ENCODE measurements at regions of chr12 and their contacts with region 1.

Region 1: GRCh38 chr12:12008931-12009611 is 61.7 kb upstream of the BCL2L14 start:
- DNase-seq: peak; percentile 87
- H3K4me3 Mint-ChIP-seq: peak overlapping the region; percentile 25
- H3K27ac Mint-ChIP-seq: peak overlapping the region; percentile 99
- H3K4me1 Mint-ChIP-seq: peaks cover 74% of the 10 kb centered on the region
- H3K27me3 Mint-ChIP-seq: no peaks in the 10 kb centered on the region

Region 2: DNA sequence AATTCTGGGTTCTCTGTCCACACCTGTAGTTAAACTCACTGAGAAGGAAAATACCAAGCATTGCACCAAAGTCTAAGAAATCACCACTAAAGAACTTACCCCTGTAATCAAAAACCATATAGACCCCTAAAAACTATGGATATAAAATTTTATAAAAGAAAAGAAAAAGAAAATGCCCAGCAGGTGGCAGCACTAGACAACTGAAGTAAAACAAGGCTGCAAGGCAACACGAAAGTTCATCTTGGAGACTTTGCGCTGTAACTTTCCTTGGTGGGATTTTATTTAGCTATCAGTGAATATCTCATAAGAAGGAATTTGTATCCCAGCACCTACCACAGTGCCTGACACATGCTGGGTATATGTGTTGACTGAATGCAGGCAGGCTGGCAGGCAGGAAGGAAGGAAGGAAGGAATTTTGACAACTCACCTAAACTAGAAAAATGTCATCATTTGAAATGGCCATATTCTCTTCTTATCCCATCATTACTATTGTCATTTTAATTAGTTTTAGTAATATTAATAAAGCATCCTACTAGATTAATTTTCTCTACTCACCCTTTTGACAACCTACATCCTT is 427.8 kb before region 1 on chr12:
- CTCF ChIA-PET with region 1: interaction called, 15 read pairs
- intact Hi-C with region 1: loop called (anchors 1 kb)
- DNase-seq: peak; percentile 84
- H3K4me3 Mint-ChIP-seq: no peak overlapping the region
- H3K27ac Mint-ChIP-seq: no peak overlapping the region
- H3K4me1 Mint-ChIP-seq: peaks cover 18% of the 10 kb centered on the region
- H3K27me3 Mint-ChIP-seq: peaks cover 6% of the 10 kb centered on the region

Region 3: GRCh38 chr12:11730299-11731041 is 278.6 kb before region 1 on chr12:
- CTCF ChIA-PET with region 1: interaction called, 3 read pairs
- intact Hi-C with region 1: loop called (anchors 1 kb)
- DNase-seq: peak; percentile 27
- H3K4me3 Mint-ChIP-seq: no peak overlapping the region
- H3K27ac Mint-ChIP-seq: peak overlapping the region; percentile 85
- H3K4me1 Mint-ChIP-seq: peaks cover 86% of the 10 kb centered on the region
- H3K27me3 Mint-ChIP-seq: no peaks in the 10 kb centered on the region

Region 4: GRCh38 chr12:11780521-11781101 is 228.5 kb before region 1 on chr12:
- CTCF ChIA-PET with region 1: interaction called, 11 read pairs
- intact Hi-C with region 1: loop called (anchors 1 kb)
- DNase-seq: peak; percentile 68
- H3K4me3 Mint-ChIP-seq: peak overlapping the region; percentile 2
- H3K27ac Mint-ChIP-seq: peak overlapping the region; percentile 85
- H3K4me1 Mint-ChIP-seq: peaks cover 74% of the 10 kb centered on the region
- H3K27me3 Mint-ChIP-seq: no peaks in the 10 kb centered on the region

Region 5: DNA sequence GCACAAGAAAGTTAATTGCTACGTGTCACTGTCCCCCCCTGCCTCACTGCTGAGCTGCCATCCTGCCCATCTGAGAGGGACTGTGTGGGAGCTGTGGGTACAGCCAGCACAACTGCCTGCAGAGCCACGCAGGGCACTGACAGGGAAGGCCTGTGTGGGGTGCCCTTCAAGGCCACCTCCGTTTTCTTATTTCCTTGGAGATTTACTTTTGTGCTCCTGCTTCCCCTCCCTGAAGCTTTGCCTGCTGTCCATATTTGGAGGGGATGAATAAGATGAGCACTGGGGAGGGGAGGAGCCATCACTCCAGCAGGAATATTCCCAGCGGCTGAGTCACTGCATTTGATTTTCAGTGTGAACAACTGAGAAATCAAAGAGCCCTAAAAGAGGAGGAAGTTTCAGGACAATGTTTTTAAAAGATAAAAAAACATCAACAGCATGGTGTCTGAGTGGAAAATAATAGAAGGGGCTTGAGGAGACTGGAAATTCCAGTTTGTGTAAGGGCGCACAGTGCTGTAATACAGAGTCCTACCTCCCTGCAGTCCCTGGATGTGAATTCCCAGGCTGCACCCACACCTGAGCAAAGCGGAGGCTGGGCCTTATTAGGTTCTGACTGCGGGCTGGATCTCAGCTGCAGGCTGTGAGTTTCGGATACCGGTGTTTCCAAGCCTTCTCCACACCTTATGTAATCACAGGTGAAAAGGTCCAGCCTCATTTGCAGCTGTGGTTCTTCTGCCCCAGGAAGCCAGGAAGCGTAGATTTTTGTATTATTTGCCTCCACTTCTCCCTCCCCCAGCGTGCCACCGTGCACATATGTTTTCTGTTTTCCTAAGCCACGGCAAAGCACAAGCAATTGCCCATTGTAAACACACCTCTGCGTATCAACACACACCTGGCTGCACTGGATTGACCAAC is 130.9 kb before region 1 on chr12:
- CTCF ChIA-PET with region 1: no interaction called
- intact Hi-C with region 1: loop called (anchors 1 kb)
- DNase-seq: peak; percentile 26
- H3K4me3 Mint-ChIP-seq: no peak overlapping the region
- H3K27ac Mint-ChIP-seq: no peak overlapping the region
- H3K4me1 Mint-ChIP-seq: peaks cover 47% of the 10 kb centered on the region
- H3K27me3 Mint-ChIP-seq: no peaks in the 10 kb centered on the region

Region 6: DNA sequence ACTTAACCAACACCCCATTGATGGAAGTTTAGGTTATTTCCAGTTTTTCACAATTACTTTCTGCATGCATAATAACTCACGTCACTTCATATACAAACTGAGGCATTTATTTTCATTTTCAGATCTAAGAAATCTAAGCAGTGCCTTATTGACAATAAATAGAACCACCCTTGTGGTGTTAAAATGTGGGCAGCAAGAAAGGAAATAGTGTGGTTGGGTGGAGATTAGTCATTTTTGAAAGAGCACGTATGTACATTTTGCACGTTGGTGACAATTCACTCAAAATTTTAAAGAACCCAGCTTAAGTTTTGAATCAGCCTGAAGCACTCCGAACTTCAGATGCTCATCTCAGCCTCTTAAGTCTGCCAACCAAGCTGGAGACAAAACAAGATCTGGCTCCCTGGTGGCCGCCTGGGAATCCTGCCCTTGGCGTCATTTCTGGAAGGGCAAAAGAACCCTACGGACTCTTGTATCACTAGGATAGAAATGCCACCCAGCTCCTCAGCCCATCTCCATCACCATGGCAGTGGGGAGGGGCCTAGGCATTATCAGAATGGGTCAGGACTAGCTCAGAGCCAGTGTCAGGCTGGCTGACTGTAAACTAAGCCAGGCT is 27.8 kb before region 1 on chr12:
- CTCF ChIA-PET with region 1: interaction called, 42 read pairs
- intact Hi-C with region 1: loop called (anchors 1 kb)
- DNase-seq: peak; percentile 72
- H3K4me3 Mint-ChIP-seq: no peak overlapping the region
- H3K27ac Mint-ChIP-seq: peak overlapping the region; percentile 98
- H3K4me1 Mint-ChIP-seq: peaks cover 51% of the 10 kb centered on the region
- H3K27me3 Mint-ChIP-seq: no peaks in the 10 kb centered on the region

Region 7: GRCh38 chr12:12239127-12239526 is 230.1 kb after region 1 on chr12:
- CTCF ChIA-PET with region 1: no interaction called
- intact Hi-C with region 1: no loop called
- DNase-seq: no peak
- H3K4me3 Mint-ChIP-seq: no peak overlapping the region
- H3K27ac Mint-ChIP-seq: no peak overlapping the region
- H3K4me1 Mint-ChIP-seq: no peaks in the 10 kb centered on the region
- H3K27me3 Mint-ChIP-seq: peaks cover 2% of the 10 kb centered on the region

Region 8: DNA sequence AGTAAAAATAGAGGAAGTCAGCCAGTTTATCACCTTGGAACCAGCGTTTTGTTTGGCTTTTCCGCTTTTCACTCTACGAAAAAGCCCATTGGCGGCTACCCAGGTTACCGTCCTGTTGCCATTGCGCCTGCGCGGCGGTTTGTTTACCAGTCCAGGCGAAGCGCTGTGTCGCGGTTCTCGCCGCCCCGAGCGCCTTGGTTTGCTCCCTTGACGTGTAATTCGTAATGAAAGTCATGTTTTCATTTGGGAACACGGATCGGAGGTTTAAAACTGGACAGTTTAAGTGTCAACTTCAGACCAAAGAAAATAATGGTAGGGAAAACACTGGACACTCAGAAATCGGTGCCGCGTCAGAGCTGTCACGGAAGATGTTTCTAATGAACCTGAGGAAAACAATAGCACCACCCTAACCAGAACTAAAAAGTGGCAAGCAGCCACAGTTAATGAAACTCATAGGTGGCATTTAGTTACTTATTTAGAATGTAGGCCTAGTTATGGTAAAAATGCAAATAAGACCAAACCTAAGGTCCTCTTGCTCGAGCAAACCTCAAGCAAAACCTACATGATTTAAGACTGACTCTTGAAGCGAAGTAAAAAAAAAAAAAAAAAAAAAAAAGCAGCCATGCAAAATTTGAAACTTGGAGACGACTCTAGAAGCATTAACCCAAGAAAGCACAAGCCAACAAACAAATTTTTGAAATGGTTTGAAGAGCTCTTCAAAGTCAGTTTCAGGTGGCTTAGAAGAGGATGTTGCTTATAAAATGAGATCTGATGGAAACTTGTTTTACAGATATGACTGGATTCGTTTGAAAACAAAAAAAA is 687.7 kb after region 1 on chr12:
- CTCF ChIA-PET with region 1: no interaction called
- intact Hi-C with region 1: loop called (anchors 2 kb)
- DNase-seq: peak; percentile 93
- H3K4me3 Mint-ChIP-seq: peak overlapping the region; percentile 97
- H3K27ac Mint-ChIP-seq: peak overlapping the region; percentile 98
- H3K4me1 Mint-ChIP-seq: peaks cover 38% of the 10 kb centered on the region
- H3K27me3 Mint-ChIP-seq: no peaks in the 10 kb centered on the region